ENCODE measurements at regions of chr6 and their contacts with region 1.

Region 1: DNA sequence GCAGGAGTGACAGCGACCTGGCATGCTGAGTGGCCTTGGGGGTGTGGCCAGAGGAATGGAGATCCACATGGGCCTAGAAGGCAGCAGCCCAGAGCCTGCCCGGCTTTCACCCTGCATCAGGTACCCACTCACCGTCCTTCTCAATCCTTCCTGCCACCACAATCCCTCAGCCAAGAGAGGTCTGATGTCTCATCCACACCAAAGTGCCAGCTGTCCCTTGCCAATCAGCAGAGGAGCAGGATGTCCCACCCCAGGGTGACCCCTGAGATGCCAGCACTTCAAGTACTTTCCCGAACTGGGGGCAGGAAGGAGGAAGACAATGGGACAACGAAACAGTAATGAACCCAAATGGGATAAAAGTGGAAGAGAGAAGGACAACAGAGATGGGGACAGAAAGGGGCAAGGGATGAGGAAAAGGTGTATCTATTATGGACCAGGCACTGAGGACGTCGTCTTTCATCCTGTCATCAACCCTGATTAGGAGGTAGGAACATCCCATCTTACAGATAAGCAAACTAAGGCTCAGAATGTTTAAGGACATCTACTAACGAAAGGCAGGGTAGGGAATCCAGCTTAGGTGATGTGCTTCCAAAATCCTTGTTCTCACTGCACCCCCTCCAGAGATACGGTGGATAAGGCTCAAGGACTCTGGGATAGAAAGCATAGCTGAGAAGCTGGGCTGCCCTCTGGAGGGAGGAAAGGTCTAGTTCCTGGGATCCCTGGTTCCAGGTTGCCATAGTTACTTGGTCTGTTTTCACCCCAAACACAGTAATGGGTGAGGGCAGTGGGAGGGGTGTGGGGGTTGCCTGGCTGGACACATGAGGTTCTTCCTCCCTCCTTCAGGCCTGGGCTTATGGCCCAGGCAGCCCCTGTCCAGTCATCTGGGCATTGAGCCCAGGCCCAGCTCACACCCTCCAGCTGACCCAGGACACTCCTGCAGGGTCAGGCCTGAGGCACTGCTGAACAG is 4.5 kb upstream of the TNXB start:
- DNase-seq: no peak
- H3K4me3 ChIP-seq: no peak overlapping the region
- H3K27ac ChIP-seq: peak overlapping the region; percentile 40
- H3K4me1 ChIP-seq: peaks cover 5% of the 10 kb centered on the region
- H3K27me3 ChIP-seq: no peaks in the 10 kb centered on the region
- CTCF ChIP-seq: peak in 1 of 2 donors; percentile 12

Region 2: GRCh38 chr6:32092760-32093497 is 20.7 kb before region 1 on chr6:
- CTCF ChIA-PET with region 1: no interaction called
- dilution Hi-C with region 1: no loop called
- in situ Hi-C with region 1: no loop called
- intact Hi-C with region 1: no loop called
- DNase-seq: no peak
- H3K4me3 ChIP-seq: no peak overlapping the region
- H3K27ac ChIP-seq: no peak overlapping the region
- H3K4me1 ChIP-seq: peaks cover 14% of the 10 kb centered on the region
- H3K27me3 ChIP-seq: peaks cover 33% of the 10 kb centered on the region
- CTCF ChIP-seq: no peak

Region 3: GRCh38 chr6:32406857-32407256 is 293.2 kb after region 1 on chr6 and contains the start of gene BTNL2:
- CTCF ChIA-PET with region 1: no interaction called
- dilution Hi-C with region 1: loop called (anchors 5 kb)
- in situ Hi-C with region 1: no loop called
- intact Hi-C with region 1: no loop called
- DNase-seq: no peak
- H3K4me3 ChIP-seq: no peak within 1 kb of the TSS
- H3K27ac ChIP-seq: no peak within 1 kb of the TSS
- H3K4me1 ChIP-seq: no peaks in the 10 kb centered on the region
- H3K27me3 ChIP-seq: peaks cover 6% of the 10 kb centered on the region
- CTCF ChIP-seq: no peak
- total RNA-seq, gene BTNL2: not detected

Measured in mammary epithelial cell (primary cell).